ENCODE measurements at regions of chr12 and their contacts with region 1.

Region 1: GRCh38 chr12:28253161-28253641 is 62.9 kb downstream of the CCDC91 start:
- DNase-seq: peak; percentile 76
- H3K4me3 Mint-ChIP-seq: peak overlapping the region; percentile 74
- H3K27ac Mint-ChIP-seq: peak overlapping the region; percentile 97
- H3K4me1 Mint-ChIP-seq: peaks cover 42% of the 10 kb centered on the region
- H3K27me3 Mint-ChIP-seq: no peaks in the 10 kb centered on the region

Region 2: DNA sequence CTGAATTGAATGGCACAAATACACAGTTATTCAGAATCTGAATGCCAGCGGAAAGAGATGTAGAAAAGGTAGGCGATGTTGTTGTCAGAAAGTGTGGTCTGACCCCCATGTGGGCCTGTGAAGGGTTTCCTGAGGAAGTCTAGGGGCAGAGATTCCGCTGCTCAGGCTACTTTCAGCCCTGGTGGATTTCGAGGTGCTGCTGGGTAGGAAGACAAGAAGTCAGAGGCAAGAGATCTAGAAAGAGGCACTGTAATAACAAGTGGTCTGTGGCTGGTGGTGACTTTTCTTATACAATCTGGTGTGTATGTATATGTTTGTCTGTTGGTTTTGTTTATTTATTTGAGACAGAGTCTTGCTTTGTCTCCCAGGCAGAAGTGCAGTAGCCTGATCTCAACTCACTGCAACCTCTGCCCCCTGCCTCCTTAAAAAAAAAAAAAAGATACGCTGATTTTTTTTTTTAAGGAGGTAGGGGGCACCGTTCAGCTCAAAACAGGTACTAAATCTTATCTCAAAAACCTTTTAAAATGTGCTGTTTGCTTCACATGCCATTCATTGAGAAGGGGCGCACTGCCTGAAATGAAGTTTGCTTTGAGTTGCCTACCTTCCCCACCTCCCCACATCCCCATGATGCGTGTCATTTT is 446.0 kb before region 1 on chr12:
- intact Hi-C with region 1: loop called (anchors 1 kb)
- DNase-seq: peak; percentile 65
- H3K4me3 Mint-ChIP-seq: peak overlapping the region; percentile 3
- H3K27ac Mint-ChIP-seq: peak overlapping the region; percentile 43
- H3K4me1 Mint-ChIP-seq: peaks cover 17% of the 10 kb centered on the region
- H3K27me3 Mint-ChIP-seq: peaks cover 10% of the 10 kb centered on the region

Region 3: GRCh38 chr12:28171356-28172060 is 81.7 kb before region 1 on chr12:
- intact Hi-C with region 1: loop called (anchors 1 kb)
- DNase-seq: no peak
- H3K4me3 Mint-ChIP-seq: no peak overlapping the region
- H3K27ac Mint-ChIP-seq: no peak overlapping the region
- H3K4me1 Mint-ChIP-seq: peaks cover 7% of the 10 kb centered on the region
- H3K27me3 Mint-ChIP-seq: no peaks in the 10 kb centered on the region

Region 4: DNA sequence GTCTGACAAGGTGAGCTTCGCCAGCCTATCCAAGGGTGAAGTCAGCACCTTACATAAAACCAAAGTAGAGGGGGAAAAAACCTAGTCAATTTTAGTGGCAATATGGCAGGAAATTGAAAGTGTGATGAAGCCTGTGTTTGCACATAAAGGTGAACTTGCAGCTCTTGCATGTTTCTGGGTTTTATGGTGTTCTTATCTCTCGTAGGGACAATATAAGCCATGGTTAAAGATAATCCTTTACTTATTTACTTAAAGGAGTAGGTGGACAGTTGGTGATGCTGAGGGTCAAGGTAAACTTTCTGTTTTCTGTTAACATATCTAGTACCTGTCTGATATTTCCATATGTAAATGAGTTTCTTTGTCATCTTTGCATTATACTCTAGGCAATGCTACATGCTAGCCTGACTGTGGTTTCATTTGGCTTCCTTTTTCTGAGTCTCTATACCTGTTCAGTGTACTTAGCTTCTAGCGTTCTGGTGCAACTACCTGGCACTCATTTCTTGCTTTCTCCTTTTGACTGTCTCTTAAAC is 30.1 kb before region 1 on chr12:
- intact Hi-C with region 1: loop called (anchors 1 kb)
- DNase-seq: peak; percentile 60
- H3K4me3 Mint-ChIP-seq: peak overlapping the region; percentile 44
- H3K27ac Mint-ChIP-seq: peak overlapping the region; percentile 31
- H3K4me1 Mint-ChIP-seq: peaks cover 29% of the 10 kb centered on the region
- H3K27me3 Mint-ChIP-seq: peaks cover 9% of the 10 kb centered on the region

Region 5: GRCh38 chr12:28306535-28306934 is 53.3 kb after region 1 on chr12:
- intact Hi-C with region 1: loop called (anchors 1 kb)
- DNase-seq: no peak
- H3K4me3 Mint-ChIP-seq: no peak overlapping the region
- H3K27ac Mint-ChIP-seq: peak overlapping the region; percentile 64
- H3K4me1 Mint-ChIP-seq: peaks cover 4% of the 10 kb centered on the region
- H3K27me3 Mint-ChIP-seq: no peaks in the 10 kb centered on the region

Measured in activated CD4-positive, alpha-beta T cell treated with anti-CD3 and anti-CD28 coated beads, Interleukin-2, amount 10 ng/mL, durations not matched to agents 24 days and 14 days (primary cell).